Thyroid gland (tissue), 4 donors: ENCODE measurements at regions of chr3 and their contacts with region 1.

Region 1: GRCh38 chr3:128794770-128795649 is 69.0 kb downstream of the RAB7A start:
- DNase-seq: peak; percentile 46 to 59
- H3K4me3 ChIP-seq: no peak overlapping the region
- H3K27ac ChIP-seq: no peak overlapping the region
- H3K4me1 ChIP-seq: peaks cover 7 to 11% of the 10 kb centered on the region in 2 donors
- H3K27me3 ChIP-seq: no peaks in the 10 kb centered on the region
- CTCF ChIP-seq: peak; percentile 18 to 81 (median 74)
- POLR2A ChIP-seq: no peak

Region 2: DNA sequence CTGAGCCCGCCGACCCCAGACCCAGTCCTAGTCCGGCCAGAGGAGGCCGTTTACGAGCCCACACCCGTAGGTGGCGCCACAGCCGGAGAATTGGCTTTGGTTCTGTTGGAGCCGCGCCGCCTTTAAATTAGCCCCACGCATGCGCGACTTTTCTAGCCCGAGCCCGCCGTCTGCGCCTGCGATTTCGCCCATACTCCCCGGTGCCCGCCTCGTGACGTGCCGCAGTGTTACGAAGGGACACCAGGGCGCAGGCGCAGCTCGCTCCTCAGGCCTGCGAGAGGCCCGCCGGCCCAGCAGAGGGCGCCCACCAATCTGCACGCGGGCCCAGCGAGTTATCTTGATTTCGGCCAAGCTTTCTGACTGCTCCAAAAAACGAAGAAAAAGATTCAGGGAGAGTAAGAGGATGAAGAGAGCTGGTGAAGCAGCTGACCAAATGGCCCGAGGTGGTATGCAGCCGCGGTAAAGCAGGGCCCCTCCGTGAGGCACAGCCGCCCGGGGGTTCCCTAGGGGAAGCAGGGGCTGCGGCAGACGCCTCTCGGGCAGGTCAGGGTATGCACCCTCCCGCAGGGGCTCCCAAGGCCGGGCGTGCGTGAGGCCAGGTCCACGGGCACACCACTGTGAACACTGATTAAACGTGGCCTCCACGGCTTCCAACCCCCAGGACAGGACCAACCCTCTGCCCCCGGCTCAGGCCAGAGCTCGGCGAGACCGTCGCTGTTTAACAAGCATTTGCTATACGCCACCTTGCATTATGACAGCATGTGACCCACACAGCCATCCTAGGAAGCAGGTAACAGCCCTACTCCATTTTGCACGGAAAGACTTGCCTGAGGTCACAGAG is 177.2 kb before region 1 on chr3:
- intact Hi-C with region 1: loop called (anchors 5 kb)
- DNase-seq: peak; percentile 98
- H3K4me3 ChIP-seq: peak overlapping the region; percentile 12 to 61 (median 59)
- H3K27ac ChIP-seq: peak overlapping the region; percentile 33 to 87 (median 79)
- H3K4me1 ChIP-seq: peaks cover 10 to 35% of the 10 kb centered on the region in 2 donors
- H3K27me3 ChIP-seq: no peaks in the 10 kb centered on the region
- CTCF ChIP-seq: peak; percentile 69 to 98 (median 88)
- POLR2A ChIP-seq: peak in 1 of 2 donors; percentile 32

Region 3: DNA sequence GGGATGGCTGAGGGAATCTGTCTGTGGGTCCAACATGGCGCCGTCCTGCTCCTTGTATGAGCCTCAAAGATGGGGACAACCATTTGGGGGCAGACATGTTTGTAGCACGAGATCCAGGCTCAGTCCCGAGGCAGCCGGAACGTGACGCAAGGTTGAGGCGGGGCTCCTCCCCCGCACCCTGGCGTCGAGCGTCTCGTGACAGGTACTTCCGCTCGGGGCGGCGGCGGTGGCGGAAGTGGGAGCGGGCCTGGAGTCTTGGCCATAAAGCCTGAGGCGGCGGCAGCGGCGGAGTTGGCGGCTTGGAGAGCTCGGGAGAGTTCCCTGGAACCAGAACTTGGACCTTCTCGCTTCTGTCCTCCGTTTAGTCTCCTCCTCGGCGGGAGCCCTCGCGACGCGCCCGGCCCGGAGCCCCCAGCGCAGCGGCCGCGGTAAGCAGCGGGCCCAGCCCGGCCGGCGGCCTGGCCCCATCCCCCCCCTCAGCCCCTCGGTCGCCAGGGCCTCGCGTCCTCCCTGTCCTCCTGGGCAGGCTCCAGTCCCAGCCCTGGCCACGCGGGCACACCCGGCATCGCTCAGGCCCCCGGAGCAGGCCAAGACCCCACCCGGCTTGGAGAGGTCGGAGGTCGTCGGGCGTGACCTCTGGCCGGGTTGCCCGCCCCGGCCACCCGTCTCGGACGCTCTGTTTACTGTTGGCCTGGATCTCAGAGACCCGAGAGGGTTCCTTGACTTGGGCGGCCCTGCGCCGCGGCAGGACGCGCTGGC is 68.9 kb before region 1 on chr3 and contains the start of gene RAB7A:
- intact Hi-C with region 1: loop called (anchors 10 kb)
- DNase-seq: peak; percentile 98 to 99
- H3K4me3 ChIP-seq: peak within 1 kb of the TSS; percentile 49 to 100 (median 97)
- H3K27ac ChIP-seq: peak within 1 kb of the TSS; percentile 86 to 97 (median 97)
- H3K4me1 ChIP-seq: peaks cover 31 to 37% of the 10 kb centered on the region in 2 donors
- H3K27me3 ChIP-seq: no peaks in the 10 kb centered on the region
- CTCF ChIP-seq: peak in 1 of 6 experiments; percentile 7
- POLR2A ChIP-seq: peak; percentile 91 to 93
- total RNA-seq, gene RAB7A: 98.9 to 114 (median 110) TPM

Region 4: DNA sequence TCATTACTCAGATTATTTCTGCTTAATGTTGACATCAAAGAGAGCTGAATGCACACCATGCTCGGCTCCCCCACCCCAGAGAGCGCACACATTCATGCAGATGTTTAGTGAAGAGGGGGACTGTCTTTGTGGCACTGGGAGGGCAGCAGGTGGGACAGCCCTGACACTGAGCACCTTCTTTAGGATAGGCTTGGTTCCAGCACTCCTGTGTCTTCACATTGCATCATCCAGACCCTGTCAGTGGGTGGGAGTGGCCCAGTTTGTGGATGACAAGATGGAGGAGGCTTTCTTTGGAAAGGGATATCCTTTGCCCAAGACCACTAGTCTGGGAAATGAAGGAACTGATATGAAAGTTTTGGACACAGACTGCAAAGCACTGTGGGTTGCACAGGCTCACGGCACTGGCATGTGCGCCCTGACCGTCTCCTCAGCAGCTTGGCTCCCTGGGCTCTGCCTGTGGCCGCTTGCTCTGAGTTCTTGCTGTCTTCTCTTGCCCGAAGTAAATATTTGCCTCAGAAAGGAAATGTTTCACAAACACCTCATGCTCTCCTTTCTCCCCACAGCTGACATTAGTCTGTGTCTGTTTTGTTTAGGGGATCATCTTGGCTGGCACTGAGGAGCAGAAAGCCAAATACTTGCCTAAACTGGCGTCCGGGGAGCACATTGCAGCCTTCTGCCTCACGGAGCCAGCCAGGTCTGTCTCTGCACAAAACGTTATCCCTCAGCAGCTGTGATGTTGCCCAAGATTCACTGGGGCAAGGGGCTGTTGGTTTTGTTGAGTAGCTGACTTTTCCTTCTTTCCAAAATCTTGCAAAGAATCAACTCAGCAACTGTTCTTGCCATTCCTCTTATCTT is 101.1 kb after region 1 on chr3:
- intact Hi-C with region 1: no loop called
- DNase-seq: no peak
- H3K4me3 ChIP-seq: no peak overlapping the region
- H3K27ac ChIP-seq: no peak overlapping the region
- H3K4me1 ChIP-seq: no peaks in the 10 kb centered on the region
- H3K27me3 ChIP-seq: no peaks in the 10 kb centered on the region
- CTCF ChIP-seq: no peak
- POLR2A ChIP-seq: no peak

Region 5: DNA sequence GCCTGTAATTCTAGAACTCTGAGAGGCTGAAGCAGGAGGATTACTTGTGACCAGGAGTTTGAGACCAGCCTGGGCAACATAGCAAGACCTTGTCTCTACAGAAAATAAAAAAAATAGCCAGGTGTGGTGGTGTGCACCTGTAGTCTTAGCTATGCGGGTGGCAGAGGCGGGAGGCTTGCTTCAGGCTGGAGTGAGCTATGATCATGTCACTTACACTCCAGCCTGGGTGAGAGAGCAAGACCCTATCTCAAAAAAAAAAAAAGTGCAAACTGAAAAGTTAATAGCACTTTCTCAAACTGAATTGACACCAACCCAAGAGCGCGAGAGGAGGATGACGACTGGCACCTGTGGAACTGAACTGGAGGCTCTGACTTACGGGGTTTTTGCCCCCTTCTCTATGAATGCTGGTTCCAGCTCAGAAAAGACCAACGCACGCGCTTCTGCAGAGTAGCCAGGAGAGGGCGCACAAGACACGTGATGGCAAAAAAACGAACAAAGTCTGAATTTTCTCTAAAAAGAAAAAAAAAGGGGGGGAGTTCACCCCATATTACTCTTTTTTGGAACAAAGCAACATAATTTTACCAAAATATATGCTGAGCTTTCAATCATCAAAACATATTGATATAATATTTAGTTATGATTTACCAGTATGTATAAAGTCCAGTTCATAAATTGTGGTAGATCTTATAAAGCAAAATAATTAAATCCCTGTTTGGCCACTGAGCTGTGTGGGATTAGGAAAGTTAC is 175.2 kb after region 1 on chr3:
- intact Hi-C with region 1: no loop called
- DNase-seq: peak; percentile 30 to 35
- H3K4me3 ChIP-seq: no peak overlapping the region
- H3K27ac ChIP-seq: no peak overlapping the region
- H3K4me1 ChIP-seq: peaks cover 0 to 7% of the 10 kb centered on the region in 2 donors
- H3K27me3 ChIP-seq: no peaks in the 10 kb centered on the region
- CTCF ChIP-seq: peak; percentile 75 to 94 (median 82)
- POLR2A ChIP-seq: no peak